Right cardiac atrium (tissue), 5 donors: ENCODE measurements at regions of chr15 and their contacts with region 1.

Region 1: GRCh38 chr15:91224755-91225380 is 124.8 kb downstream of the SV2B start:
- DNase-seq: no peak
- ATAC-seq: peak; percentile 33 to 62
- H3K4me3 ChIP-seq: no peak overlapping the region
- H3K27ac ChIP-seq: no peak overlapping the region
- H3K4me1 ChIP-seq: no peaks in the 10 kb centered on the region
- H3K27me3 ChIP-seq: no peaks in the 10 kb centered on the region

Region 2: GRCh38 chr15:91055548-91056331 is 169.1 kb before region 1 on chr15:
- intact Hi-C with region 1: loop called in 3 of 4 experiments (anchors 2 to 5 kb)
- DNase-seq: peak; percentile 41 to 60 (median 56)
- ATAC-seq: peak; percentile 66 to 75
- H3K4me3 ChIP-seq: no peak overlapping the region
- H3K27ac ChIP-seq: no peak overlapping the region
- H3K4me1 ChIP-seq: no peaks in the 10 kb centered on the region
- H3K27me3 ChIP-seq: no peaks in the 10 kb centered on the region